Activated T-helper 1 cell treated with anti-CD3 and anti-CD28 coated beads, Interleukin-12 subunit alpha, Interleukin-12 subunit beta, Interleukin-2, Interleukin-4 antibody, amounts not matched to agents 30 ng/mL and 10 ng/mL and 1 ng/mL, durations not matched to agents 14 hours and 24 hours and 36 hours (primary cell): ENCODE measurements at regions of chr15 and their contacts with region 1.

Region 1: GRCh38 chr15:90101969-90102890 is at the start of gene IDH2:
- DNase-seq: peak; percentile 72
- H3K4me3 Mint-ChIP-seq: peak within 1 kb of the TSS; percentile 89
- H3K27ac Mint-ChIP-seq: peak within 1 kb of the TSS; percentile 94
- H3K4me1 Mint-ChIP-seq: peaks cover 52% of the 10 kb centered on the region
- H3K27me3 Mint-ChIP-seq: peaks cover 12% of the 10 kb centered on the region
- total RNA-seq, gene IDH2: 94.1 and 96.3 TPM in 2 replicates

Region 2: DNA sequence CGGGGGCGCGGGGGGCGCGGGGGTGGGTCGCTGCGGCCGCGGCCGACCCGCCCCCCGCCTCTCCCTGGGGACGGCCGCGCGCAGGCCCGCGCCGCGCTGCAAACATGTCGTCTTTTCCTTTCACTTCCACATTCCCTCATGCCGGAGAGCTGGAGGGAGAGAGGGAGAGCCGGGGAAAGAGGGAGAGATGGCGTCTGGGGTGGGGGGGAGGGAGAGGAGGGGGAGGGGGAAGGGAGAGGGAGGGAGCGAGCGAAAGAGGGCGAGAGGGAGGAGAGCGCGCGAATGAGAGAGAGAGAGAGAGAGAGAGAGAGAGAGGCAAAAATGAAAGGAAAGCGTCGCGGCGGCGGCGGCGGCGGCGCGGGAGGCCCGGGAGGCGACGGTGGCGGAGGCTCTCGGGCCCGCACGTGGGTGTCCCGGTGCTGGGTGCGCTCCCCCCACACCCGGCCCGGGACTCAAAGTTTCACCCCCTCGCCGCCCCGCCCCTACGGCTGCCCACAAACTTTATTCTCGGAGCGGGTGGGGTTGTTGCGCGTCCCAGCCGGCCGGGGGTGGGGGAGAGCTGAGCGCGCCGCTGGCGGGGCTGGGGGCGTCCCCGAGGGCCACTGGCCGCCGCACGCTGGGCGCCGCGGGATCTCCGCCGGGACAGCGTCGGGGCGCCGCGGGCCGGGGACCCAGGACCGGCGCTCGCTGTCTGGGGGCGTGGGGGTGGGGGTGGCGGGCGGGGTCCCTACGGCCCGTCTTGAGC is 100.4 kb before region 1 on chr15:
- intact Hi-C with region 1: loop called (anchors 1 kb)
- DNase-seq: peak; percentile 53
- H3K4me3 Mint-ChIP-seq: peak overlapping the region; percentile 85
- H3K27ac Mint-ChIP-seq: peak overlapping the region; percentile 86
- H3K4me1 Mint-ChIP-seq: peaks cover 53% of the 10 kb centered on the region
- H3K27me3 Mint-ChIP-seq: peaks cover 11% of the 10 kb centered on the region

Region 3: DNA sequence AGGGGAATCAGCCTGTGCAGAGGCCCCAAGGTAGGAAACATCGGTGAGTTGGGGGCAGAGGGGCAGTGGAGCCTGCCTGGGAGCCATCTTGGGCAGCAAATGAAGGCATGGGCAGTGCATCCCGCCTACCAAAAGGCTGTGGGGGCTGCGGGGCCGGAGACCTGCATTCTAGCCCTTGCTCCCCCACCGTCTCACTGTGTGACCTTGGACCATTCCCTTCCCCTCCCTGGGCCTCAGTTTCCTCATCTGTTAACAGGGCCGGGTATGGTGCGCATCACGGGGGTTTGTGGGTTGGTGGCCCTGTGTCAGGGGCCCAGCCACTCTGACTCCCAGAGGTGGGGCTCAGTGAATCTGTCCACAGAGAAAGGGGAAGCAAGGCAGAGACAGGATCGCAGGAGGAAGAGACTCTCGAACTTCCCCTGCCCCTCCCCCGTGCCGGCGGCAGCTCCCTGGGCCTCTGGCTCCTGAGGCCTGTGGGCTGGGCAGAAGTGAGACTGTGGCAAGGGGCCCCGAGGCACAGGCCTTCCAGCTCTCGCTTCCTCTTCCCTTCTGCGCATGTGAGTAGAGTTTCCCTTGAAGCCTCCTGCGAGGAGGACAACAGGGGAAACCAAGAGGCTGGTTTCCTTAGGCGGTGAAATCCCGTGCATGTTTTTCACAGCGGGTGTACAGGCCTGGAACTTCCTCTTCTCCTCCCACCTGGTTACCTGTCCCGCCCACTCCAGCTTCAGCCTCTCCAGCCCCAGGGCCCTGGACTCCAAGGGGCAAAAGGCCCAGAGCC is 42.8 kb before region 1 on chr15:
- intact Hi-C with region 1: loop called (anchors 2 kb)
- DNase-seq: peak; percentile 69
- H3K4me3 Mint-ChIP-seq: peak overlapping the region; percentile 35
- H3K27ac Mint-ChIP-seq: peak overlapping the region; percentile 85
- H3K4me1 Mint-ChIP-seq: peaks cover 25% of the 10 kb centered on the region
- H3K27me3 Mint-ChIP-seq: no peaks in the 10 kb centered on the region

Region 4: DNA sequence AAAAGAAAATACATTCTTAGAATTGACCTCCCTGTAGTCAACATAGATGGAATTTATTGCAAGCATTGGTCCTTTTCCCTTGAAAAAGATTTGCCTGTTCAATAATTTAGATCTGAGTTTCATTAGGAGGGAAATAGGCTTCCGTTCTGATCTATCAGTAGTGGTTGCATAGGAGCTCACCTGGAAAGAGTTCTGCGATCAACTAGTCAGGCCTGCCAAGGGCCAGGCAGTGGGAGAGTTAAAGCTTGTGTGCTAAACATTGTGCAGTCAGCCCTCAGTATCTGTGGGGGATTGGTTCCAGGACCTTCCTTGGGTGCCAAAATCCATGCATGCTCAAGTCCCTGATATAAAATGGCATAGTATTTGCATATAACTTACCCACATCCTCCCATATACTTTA is 29.6 kb after region 1 on chr15:
- intact Hi-C with region 1: no loop called
- DNase-seq: no peak
- H3K4me3 Mint-ChIP-seq: no peak overlapping the region
- H3K27ac Mint-ChIP-seq: no peak overlapping the region
- H3K4me1 Mint-ChIP-seq: peaks cover 6% of the 10 kb centered on the region
- H3K27me3 Mint-ChIP-seq: peaks cover 8% of the 10 kb centered on the region

Region 5: DNA sequence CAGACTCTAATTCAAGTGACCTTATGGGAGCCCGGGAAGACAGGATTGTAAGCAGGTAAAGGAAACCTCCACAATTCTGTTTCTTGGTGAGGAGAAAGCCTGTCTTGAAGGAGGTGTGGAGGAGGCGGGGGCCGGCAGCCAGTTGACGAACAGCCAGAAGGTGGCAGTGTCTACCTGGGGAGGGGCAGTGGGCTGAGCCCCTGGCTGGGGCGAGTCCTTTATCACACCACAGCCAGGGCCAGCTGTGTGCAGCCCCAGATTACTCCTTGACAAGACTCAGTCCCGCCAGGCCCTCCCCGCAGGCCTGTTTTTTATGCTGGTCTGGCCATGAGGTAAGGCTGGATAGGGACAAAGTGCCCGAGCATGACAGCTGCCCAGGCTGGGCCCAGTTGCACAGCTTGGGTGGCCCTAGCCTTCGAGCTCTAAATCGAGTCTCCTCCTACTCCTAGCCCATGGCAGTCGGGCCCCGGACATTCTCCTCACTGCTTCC is 41.0 kb after region 1 on chr15:
- intact Hi-C with region 1: loop called (anchors 2 kb)
- DNase-seq: peak; percentile 59
- H3K4me3 Mint-ChIP-seq: peak overlapping the region; percentile 1
- H3K27ac Mint-ChIP-seq: peak overlapping the region; percentile 52
- H3K4me1 Mint-ChIP-seq: peaks cover 26% of the 10 kb centered on the region
- H3K27me3 Mint-ChIP-seq: no peaks in the 10 kb centered on the region

Region 6: DNA sequence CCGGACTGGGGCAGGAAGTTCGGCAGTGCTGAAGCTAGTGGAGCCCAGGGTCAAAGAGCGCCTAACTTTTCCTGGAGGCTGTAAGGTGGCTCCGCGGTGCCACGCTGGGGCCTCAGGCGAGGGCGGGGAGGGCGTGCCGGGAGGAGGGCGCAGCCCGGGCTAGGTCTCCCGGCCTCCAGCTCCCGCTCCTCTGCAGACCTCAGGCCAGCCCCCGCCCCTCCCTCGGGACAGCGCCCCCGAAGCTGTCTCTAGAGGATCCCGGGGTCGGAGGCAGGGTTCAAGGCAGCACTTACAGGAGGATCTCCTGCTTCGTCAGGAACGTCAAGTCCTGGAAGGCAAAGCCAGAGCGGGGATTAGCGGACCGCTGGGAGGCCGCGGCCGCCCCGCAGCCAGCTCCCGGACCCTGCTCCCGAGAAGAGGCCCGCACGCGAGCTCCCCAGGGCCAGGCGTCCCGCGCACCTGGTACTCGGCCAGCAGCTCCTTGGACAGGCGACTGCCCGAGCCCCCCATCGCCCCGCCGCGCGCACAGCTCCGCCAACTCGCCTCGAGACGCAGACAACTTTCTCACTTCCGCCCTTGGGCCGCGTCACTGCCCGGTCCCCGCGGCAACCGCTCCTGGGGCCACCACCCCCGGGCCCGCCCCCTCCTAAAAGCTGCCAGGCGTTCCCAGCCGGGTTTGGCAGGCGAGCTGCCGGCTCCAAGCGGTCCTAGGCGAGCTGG is 131.3 kb after region 1 on chr15 and contains the start of gene CIB1:
- intact Hi-C with region 1: loop called (anchors 2 kb)
- DNase-seq: peak; percentile 98
- H3K4me3 Mint-ChIP-seq: peak within 1 kb of the TSS; percentile 93
- H3K27ac Mint-ChIP-seq: peak within 1 kb of the TSS; percentile 94
- H3K4me1 Mint-ChIP-seq: peaks cover 57% of the 10 kb centered on the region
- H3K27me3 Mint-ChIP-seq: no peaks in the 10 kb centered on the region
- total RNA-seq, gene CIB1: 144 and 145 TPM in 2 replicates

Region 7: DNA sequence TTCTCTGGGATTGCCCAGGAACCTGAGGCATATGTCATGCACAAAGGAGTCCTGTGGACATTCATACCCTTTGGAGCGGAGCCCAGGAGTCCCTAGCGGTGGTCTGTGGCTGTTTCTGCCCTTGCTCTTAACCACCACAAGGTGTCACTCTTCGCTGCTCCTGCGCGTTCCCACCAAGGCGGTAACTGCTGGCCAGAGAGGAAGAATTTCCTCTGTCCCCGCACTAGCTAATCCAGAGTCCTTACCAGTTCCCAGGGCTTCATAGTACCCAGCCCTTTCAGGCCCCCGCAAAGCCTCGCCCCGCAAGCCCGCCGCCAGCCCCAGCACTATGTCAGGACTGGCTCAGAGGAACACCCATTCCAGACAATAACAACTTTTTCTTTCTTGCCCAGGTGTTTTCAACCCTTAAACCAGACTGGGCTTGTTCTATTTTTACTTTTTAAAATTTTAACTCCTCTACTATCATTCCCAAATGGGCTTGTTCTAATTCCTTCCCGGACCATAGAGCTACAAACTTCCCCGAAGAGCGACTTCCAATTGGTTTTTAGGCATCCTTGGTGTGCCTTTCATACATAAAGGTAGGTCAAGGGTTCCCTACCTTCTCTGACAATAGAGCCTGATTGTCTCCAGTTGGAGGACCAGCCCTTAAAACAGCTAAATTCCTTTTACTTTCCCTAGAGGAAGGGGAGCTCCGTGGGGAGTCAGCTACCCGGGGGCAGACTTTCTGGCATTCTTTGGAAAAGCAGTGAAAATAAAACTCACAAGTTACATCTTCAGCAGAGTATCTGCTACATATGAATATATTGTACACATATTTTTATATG is 218.0 kb after region 1 on chr15:
- intact Hi-C with region 1: no loop called
- DNase-seq: peak; percentile 60
- H3K4me3 Mint-ChIP-seq: no peak overlapping the region
- H3K27ac Mint-ChIP-seq: no peak overlapping the region
- H3K4me1 Mint-ChIP-seq: peaks cover 9% of the 10 kb centered on the region
- H3K27me3 Mint-ChIP-seq: peaks cover 2% of the 10 kb centered on the region

Region 8: DNA sequence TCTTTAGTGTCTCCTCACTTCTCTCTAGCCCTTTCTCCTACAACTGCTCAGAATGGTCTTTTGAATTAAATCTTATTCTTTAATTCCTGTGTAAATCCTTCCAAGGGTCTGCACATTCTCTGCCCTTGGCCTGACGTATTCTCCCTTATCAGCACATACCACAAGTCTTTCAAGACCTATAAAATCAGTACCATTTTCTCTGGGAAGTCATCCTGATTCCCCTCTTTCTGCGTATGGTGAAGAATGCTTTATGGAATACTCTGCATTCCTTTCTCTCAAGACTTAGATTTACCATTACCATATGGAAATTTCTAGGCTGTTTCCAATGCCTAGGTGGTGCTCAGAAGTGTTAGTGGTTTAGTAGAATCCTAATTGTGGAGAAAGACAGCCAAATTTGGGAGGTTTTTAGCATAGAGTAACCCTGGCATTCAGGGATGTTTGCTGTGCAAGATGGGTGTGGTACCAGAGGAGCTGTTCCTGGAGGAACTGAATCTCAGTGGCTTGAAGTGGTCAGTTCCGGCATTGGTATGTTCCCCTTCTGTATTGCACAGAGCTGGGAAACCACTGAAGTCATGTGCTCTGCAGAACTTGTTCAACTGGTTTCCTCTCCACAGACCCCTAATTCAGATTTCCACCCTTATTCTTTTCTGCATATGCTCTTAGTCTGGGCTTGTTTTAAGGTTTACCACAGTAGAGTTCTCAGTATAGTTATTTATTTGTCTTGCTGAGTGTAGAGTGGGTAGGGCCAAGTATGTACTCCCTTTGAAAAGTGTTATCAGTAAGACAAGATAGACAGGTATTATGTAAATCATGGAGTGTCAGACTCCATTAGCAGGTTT is 310.3 kb after region 1 on chr15:
- intact Hi-C with region 1: loop called (anchors 2 kb)
- DNase-seq: no peak
- H3K4me3 Mint-ChIP-seq: peak overlapping the region; percentile 13
- H3K27ac Mint-ChIP-seq: peak overlapping the region; percentile 74
- H3K4me1 Mint-ChIP-seq: peaks cover 79% of the 10 kb centered on the region
- H3K27me3 Mint-ChIP-seq: no peaks in the 10 kb centered on the region